Activated T-helper 1 cell treated with anti-CD3 and anti-CD28 coated beads, Interleukin-12 subunit alpha, Interleukin-12 subunit beta, Interleukin-2, Interleukin-4 antibody, amounts not matched to agents 30 ng/mL and 10 ng/mL and 1 ng/mL, durations not matched to agents 14 hours and 24 hours and 36 hours (primary cell): ENCODE measurements at regions of chr17 and their contacts with region 1.

Region 1: GRCh38 chr17:63984651-63985386 is 12.1 kb upstream of the SCN4A start:
- DNase-seq: peak; percentile 55
- H3K4me3 Mint-ChIP-seq: no peak overlapping the region
- H3K27ac Mint-ChIP-seq: peak overlapping the region; percentile 91
- H3K4me1 Mint-ChIP-seq: peaks cover 15% of the 10 kb centered on the region
- H3K27me3 Mint-ChIP-seq: peaks cover 4% of the 10 kb centered on the region

Region 2: GRCh38 chr17:63919311-63919723 is 65.5 kb before region 1 on chr17:
- intact Hi-C with region 1: loop called (anchors 1 kb)
- DNase-seq: peak; percentile 65
- H3K4me3 Mint-ChIP-seq: no peak overlapping the region
- H3K27ac Mint-ChIP-seq: no peak overlapping the region
- H3K4me1 Mint-ChIP-seq: peaks cover 7% of the 10 kb centered on the region
- H3K27me3 Mint-ChIP-seq: peaks cover 8% of the 10 kb centered on the region

Region 3: GRCh38 chr17:63966646-63967264 is 18.1 kb before region 1 on chr17:
- intact Hi-C with region 1: loop called (anchors 1 kb)
- DNase-seq: no peak
- H3K4me3 Mint-ChIP-seq: no peak overlapping the region
- H3K27ac Mint-ChIP-seq: no peak overlapping the region
- H3K4me1 Mint-ChIP-seq: peaks cover 6% of the 10 kb centered on the region
- H3K27me3 Mint-ChIP-seq: peaks cover 15% of the 10 kb centered on the region

Region 4: DNA sequence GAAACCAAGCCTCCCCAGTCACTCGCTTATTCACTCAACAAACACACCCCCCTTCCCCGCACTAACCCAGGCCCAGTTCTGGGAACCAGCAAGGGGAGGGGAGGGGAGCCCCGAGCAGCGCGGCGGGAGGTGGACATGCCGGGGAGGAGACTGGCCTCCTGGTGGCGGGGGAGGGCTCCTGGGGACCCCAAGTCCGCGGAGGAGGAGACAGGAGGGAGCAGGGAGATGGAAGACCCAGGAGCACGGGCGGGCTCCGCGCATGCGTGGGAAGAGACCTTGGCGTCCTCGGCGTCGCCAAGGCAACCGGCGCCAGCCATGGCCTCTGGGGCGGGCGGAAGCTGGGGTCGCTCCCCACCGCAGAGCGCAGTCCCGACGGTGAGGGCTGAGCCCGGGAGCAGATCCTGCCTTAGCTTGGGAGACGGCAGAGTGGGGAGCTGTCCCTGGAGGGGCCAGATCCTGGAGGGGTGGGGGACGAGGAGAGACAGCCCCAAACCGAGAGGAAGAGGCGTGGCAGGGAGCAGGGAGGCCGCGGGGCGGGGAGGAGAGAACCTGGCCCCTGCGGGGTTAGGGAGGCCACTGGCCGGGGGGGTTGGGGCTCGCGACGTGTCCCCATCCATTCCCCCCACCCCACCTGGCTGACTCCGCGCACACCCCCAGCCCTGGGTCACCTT is 13.4 kb after region 1 on chr17 and contains the start of gene PRR29:
- intact Hi-C with region 1: loop called (anchors 1 kb)
- DNase-seq: peak; percentile 71
- H3K4me3 Mint-ChIP-seq: peak within 1 kb of the TSS; percentile 85
- H3K27ac Mint-ChIP-seq: peak within 1 kb of the TSS; percentile 52
- H3K4me1 Mint-ChIP-seq: peaks cover 43% of the 10 kb centered on the region
- H3K27me3 Mint-ChIP-seq: peaks cover 17% of the 10 kb centered on the region
- total RNA-seq, gene PRR29: 0.44 and 0.91 TPM in 2 replicates